Activated naive CD4-positive, alpha-beta T cell treated with anti-CD3 and anti-CD28 coated beads for 36 hours (primary cell): ENCODE measurements at regions of chr3 and their contacts with region 1.

Region 1: DNA sequence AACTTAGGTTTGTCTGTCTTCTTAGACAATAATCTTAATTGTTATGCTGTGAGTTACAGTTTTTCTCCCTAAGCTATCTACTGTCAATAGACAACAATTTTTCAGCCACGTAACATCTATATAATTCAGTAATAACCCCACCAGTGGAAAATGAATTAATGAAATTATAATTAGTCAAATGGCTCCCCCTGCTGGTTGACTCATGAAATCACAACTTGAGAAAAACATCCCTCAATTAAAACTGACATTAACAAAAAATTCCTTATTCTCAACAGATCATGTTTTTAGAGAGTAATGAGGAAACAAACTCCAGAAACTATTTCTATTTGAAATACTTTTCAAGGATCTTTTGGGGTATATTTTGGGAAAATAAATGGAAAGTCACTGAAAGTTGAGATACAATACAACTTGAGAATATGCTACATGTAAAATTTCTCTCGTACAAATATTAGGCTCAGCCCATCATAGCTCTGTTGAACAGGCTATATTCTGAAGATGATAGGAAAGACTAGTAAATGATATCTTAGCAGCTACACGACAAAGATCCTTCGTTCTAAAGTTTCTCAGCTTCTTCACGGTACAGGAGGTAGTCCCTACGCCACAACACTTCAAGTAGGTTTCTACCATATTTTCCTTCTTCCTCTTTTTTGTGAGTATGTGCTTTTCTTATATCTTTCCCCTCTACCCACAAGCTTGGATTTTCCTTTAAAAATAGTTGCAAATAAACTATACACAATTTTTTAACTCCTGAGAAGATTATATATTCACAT is 20.7 kb downstream of the PPP1R2 start:
- DNase-seq: no peak
- H3K4me3 Mint-ChIP-seq: no peak overlapping the region
- H3K27ac Mint-ChIP-seq: peak overlapping the region; percentile 69
- H3K4me1 Mint-ChIP-seq: peaks cover 50% of the 10 kb centered on the region
- H3K27me3 Mint-ChIP-seq: no peaks in the 10 kb centered on the region

Region 2: GRCh38 chr3:194879991-194880939 is 642.2 kb before region 1 on chr3:
- CTCF ChIA-PET with region 1: no interaction called
- intact Hi-C with region 1: no loop called
- DNase-seq: peak; percentile 23
- H3K4me3 Mint-ChIP-seq: no peak overlapping the region
- H3K27ac Mint-ChIP-seq: no peak overlapping the region
- H3K4me1 Mint-ChIP-seq: peaks cover 11% of the 10 kb centered on the region
- H3K27me3 Mint-ChIP-seq: peaks cover 3% of the 10 kb centered on the region

Region 3: GRCh38 chr3:195337747-195338146 is 184.7 kb before region 1 on chr3:
- CTCF ChIA-PET with region 1: no interaction called
- intact Hi-C with region 1: no loop called
- DNase-seq: no peak
- H3K4me3 Mint-ChIP-seq: no peak overlapping the region
- H3K27ac Mint-ChIP-seq: peak overlapping the region; percentile 10
- H3K4me1 Mint-ChIP-seq: peaks cover 4% of the 10 kb centered on the region
- H3K27me3 Mint-ChIP-seq: no peaks in the 10 kb centered on the region

Region 4: GRCh38 chr3:195450731-195451229 is 71.7 kb before region 1 on chr3:
- CTCF ChIA-PET with region 1: no interaction called
- intact Hi-C with region 1: no loop called
- DNase-seq: no peak
- H3K4me3 Mint-ChIP-seq: no peak overlapping the region
- H3K27ac Mint-ChIP-seq: no peak overlapping the region
- H3K4me1 Mint-ChIP-seq: peaks cover 9% of the 10 kb centered on the region
- H3K27me3 Mint-ChIP-seq: no peaks in the 10 kb centered on the region

Region 5: DNA sequence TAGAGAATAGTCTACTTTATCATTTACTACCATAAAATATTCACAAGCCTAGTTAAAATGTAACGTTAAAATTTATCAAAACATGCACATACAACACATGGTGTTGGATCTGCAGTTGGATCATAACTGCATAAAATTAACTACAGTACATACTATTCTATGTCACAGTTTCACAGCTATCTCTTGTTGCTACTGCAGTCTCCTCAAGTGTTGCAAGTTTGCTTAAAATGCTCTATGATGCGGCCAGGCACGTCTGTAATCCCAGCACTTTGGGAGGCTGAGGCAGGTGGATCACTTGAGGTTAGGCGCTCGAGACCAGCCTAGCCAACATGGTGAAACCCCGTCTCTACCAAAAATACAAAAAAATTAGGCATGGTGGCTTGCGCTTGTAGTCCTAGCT is 10.4 kb after region 1 on chr3:
- CTCF ChIA-PET with region 1: interaction called, 24 read pairs
- intact Hi-C with region 1: loop called (anchors 1 kb)
- DNase-seq: no peak
- H3K4me3 Mint-ChIP-seq: no peak overlapping the region
- H3K27ac Mint-ChIP-seq: peak overlapping the region; percentile 73
- H3K4me1 Mint-ChIP-seq: peaks cover 76% of the 10 kb centered on the region
- H3K27me3 Mint-ChIP-seq: no peaks in the 10 kb centered on the region

Region 6: DNA sequence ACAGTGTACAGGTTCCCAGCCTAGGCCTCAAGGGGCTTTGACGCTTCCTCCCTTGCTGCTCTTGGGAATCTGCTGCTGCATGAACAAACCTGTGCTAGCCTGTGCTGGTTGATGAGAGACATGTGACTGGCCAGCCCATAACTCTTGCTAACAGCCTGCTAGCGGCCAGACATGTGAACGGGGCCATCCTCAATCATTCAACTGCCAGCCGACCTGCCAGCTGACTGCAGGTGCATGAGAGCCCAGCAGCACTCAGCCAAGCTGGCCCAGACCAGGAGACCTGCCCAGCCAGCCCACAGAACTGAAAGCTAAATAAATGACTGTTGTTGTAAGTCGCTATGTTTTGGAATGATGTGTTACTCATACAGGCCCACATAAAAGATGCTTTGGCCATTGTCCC is 1858.3 kb after region 1 on chr3:
- CTCF ChIA-PET with region 1: no interaction called
- intact Hi-C with region 1: no loop called
- DNase-seq: no peak
- H3K4me3 Mint-ChIP-seq: no peak overlapping the region
- H3K27ac Mint-ChIP-seq: no peak overlapping the region
- H3K4me1 Mint-ChIP-seq: no peaks in the 10 kb centered on the region
- H3K27me3 Mint-ChIP-seq: no peaks in the 10 kb centered on the region